Breast epithelium (tissue), 4 donors: ENCODE measurements at regions of chr20 and their contacts with region 1.

Region 1: DNA sequence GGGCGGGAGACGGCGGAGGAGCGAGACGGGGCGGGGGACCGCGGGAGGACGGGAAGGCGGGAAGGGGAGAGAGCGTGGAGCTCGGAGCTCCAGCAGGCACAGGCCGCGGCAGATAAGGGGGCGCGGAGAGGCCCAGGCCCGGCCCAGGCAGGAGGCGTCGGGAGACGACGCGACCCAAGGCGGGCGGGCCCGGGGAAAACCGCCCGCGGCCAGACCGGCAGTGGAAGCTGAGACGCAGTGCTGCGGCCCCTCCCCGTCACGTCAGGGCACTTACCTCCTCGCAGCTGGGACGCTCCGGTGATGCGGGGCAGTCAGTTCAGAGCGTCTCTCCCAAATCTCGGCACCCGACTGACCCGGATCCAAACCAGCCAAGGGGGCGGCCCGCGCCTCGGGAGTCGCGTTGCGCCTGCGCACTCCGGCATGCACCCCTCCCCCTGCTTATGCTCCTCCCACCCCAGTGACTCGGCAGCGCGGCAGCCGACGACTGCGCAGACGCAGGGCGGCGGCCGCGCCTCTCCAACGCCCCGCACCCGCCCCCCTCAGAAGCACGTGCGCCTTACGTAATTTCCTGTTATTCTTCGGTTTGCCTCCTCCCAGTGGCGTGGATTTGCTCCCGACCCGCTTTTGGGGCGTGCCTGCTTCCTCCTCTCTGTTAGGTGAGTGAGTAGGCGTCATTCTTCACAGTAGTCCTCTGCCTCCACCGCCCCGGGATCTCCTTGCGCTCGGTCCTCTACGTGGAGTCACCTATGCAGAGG is at the start of gene OSER1:
- DNase-seq: peak; percentile 98 to 99
- H3K4me3 ChIP-seq: peak within 1 kb of the TSS; percentile 84 to 98 (median 98)
- H3K27ac ChIP-seq: peak within 1 kb of the TSS; percentile 98 to 99
- H3K4me1 ChIP-seq: peaks cover 5% of the 10 kb centered on the region in 2 donors
- H3K27me3 ChIP-seq: no peaks in the 10 kb centered on the region
- CTCF ChIP-seq: no peak
- POLR2A ChIP-seq: peak; percentile 85
- total RNA-seq, gene OSER1: 59.6 to 73.8 (median 67.2) TPM

Region 2: GRCh38 chr20:44166477-44166876 is 44.1 kb before region 1 on chr20:
- intact Hi-C with region 1: no loop called
- DNase-seq: no peak
- H3K4me3 ChIP-seq: no peak overlapping the region
- H3K27ac ChIP-seq: peak overlapping the region in 1 of 2 donors; percentile 19
- H3K4me1 ChIP-seq: no peaks in the 10 kb centered on the region
- H3K27me3 ChIP-seq: no peaks in the 10 kb centered on the region
- CTCF ChIP-seq: no peak
- POLR2A ChIP-seq: no peak

Region 3: DNA sequence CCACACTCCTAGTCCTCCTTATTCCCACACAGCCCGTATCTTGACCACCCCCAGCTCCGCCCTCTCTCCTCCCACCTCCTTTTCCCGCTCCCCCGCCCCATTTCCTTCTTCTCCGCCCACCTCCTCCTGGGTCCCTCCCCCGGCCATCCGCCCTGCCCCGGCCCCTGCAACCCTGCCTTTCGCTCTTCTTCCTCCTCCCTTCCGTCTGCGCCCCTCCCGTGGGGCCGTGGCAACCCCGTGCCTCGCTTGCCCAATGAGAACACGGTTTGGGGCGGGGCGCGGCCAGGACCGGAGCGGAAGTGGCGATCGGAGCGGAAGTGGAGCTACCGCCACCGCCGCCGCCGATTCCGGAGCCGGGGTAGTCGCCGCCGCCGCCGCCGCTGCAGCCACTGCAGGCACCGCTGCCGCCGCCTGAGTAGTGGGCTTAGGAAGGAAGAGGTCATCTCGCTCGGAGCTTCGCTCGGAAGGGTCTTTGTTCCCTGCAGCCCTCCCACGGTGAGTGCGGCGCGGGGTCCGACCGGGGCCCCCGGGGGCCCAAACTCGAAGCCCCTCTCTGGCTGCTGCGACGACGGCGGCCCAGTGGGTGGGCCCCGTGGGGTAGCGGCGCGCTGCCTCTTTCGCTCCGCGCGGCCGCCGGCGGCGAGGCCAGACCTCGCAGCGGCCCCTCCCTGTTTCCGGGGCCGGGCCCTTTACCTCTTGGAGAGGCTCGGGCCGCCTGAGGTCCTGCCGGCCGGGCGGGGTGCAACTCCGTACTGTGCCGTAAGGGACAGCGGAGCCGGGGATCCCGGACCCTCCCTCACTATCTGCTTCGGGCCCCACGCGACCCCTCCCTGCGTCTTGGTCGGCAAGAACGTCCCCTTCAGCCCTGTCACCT is 675.0 kb after region 1 on chr20 and contains the start of gene YWHAB:
- intact Hi-C with region 1: loop called (anchors 5 kb)
- DNase-seq: peak; percentile 98
- H3K4me3 ChIP-seq: peak within 1 kb of the TSS; percentile 96 to 98 (median 97)
- H3K27ac ChIP-seq: peak within 1 kb of the TSS; percentile 97 to 98
- H3K4me1 ChIP-seq: peaks cover 0 to 13% of the 10 kb centered on the region in 2 donors
- H3K27me3 ChIP-seq: no peaks in the 10 kb centered on the region
- CTCF ChIP-seq: peak in 1 of 3 donors; percentile 25
- POLR2A ChIP-seq: peak; percentile 75
- total RNA-seq, gene YWHAB: 125 to 155 (median 139) TPM

Region 4: DNA sequence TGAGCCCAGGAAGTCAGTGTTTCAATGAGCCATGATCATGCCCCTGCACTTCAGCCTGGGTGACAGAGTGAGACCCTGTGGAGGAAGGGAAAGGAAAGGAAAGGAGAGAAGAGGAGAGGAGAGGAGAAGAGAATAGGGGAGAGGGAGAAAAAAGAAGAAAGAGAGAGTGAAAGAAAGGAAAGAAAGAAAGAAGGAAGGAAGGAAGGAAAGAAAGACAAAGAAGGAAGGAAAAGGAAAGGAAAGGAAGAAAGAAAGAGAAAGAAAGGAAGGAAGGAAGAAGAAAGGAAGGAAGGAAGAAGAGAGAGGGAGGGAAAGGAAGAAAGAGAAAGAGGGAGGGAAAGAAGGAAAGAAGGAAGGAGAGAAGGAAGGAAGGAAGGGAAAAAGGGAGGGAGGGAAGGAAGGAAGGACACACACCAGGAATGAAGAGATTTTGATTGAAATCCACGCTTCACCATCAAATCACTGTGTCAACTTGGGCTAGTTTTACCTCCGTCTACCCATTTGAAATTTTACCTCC is 1354.2 kb after region 1 on chr20:
- intact Hi-C with region 1: no loop called
- DNase-seq: no peak
- H3K4me3 ChIP-seq: no peak overlapping the region
- H3K27ac ChIP-seq: no peak overlapping the region
- H3K4me1 ChIP-seq: no peaks in the 10 kb centered on the region
- H3K27me3 ChIP-seq: peaks cover 0 to 4% of the 10 kb centered on the region in 2 donors
- CTCF ChIP-seq: no peak
- POLR2A ChIP-seq: no peak